ENCODE measurements at regions of chr11 and their contacts with region 1.

Region 1: DNA sequence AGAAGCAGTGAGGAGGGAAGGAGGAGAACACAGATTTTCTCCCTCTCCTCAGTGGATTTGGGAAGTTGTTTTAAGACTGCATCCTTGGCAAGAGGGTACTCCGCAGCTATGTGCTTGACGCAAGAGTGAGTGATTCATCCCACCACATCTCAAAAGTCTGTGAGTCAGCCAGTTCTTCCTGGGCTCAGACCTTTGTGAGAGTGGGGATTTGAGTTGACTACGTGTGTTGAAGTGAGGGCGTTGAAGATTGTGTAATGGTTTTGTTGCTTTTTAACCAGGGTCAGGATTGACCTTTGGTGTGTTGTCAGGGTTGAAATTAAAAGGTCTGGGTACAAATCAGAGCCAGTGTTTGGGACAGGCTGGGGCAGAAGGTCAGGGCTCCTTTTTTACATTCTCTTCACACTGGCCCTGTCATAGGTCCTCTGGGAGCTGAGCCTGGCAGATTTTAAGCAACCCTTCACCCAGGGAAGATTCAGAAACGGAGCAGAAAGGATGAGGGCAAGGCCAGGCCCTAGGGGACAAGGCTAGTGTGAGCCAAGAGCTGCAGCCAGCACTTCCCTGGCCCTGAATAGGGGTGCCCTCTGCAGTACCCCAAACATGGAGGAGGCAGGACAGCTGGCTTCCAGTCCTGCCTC is 4.2 kb upstream of the C11orf86 start:
- DNase-seq: peak; percentile 57
- ATAC-seq: peak; percentile 98
- H3K4me3 Mint-ChIP-seq: no peak overlapping the region
- H3K27ac Mint-ChIP-seq: peak overlapping the region; percentile 24
- H3K4me1 Mint-ChIP-seq: peaks cover 17% of the 10 kb centered on the region
- H3K27me3 Mint-ChIP-seq: peaks cover 13% of the 10 kb centered on the region

Region 2: DNA sequence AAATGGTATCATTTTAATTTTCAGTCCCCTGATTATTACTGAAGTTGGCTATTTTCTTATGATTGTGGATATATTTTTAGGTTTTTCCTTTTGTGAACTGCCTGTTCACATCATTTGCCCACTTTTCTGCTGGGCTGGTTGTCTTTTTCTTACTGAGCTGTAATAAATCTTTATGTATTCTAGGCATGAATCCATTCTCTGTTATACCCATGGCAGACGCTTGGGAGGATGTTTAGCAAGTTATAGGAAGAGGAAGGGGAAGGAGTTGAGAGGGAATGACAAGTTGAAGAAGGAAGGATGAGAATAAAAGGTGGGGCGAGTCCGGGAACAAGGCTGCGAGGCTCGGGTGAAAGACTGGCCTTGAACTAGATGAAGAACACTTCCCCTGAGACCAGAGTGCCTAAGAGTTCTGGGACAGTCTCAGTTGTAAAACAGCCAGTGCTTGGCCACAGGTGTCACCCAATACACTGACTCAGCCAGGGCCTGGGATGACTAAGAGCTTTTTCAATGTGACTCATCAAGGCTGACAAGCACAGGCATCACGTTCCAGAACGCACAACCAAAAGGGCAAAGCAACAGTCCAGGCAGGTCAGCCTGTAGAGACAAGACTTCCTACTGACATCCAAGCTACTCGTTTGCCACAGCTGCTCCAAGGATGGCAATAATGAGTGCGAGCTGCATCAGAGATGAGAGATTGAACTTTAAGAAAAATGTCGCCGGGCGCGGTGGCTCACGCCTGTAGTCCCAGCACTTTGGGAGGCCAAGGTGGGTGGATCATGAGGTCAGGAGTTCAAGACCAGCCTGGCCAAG is 78.9 kb before region 1 on chr11:
- CTCF ChIA-PET with region 1: interaction called, 5 read pairs
- POLR2A ChIA-PET with region 1: no interaction called
- intact Hi-C with region 1: loop called in 1 of 2 experiments (anchors 2 kb)
- DNase-seq: peak; percentile 85
- ATAC-seq: peak; percentile 100
- H3K4me3 Mint-ChIP-seq: no peak overlapping the region
- H3K27ac Mint-ChIP-seq: peak overlapping the region; percentile 8
- H3K4me1 Mint-ChIP-seq: peaks cover 8% of the 10 kb centered on the region
- H3K27me3 Mint-ChIP-seq: no peaks in the 10 kb centered on the region

Region 3: DNA sequence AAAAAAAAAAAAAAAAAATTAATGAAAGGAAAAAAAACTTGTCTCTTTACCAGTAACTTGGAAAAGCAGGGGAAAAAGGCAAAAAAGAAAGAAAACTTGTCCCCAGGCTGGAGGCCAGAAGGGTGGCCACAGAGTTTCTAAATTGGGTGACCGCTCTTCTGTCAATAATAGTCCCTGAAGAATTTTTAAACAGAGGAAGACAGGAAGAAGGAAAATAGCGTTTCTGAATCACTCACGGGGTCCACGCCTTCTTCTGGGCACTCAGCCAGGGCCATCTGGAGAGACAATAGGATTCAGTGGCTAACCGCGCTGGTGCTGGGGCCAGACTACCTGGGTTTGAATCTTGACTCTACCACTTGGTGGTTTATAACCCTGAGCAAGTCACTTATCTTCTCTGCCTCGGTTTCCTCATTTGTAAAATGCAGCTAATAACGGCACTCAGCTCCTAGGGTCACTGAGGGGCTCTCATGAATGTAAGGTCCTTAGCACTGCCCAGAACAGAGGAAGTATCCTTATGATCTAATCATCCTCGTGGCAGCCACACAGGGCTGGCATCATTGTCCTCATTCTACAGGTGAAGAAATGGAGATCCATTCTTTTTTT is 11.2 kb after region 1 on chr11:
- CTCF ChIA-PET with region 1: no interaction called
- POLR2A ChIA-PET with region 1: no interaction called
- intact Hi-C with region 1: no loop called
- DNase-seq: peak; percentile 56
- ATAC-seq: no peak
- H3K4me3 Mint-ChIP-seq: no peak overlapping the region
- H3K27ac Mint-ChIP-seq: no peak overlapping the region
- H3K4me1 Mint-ChIP-seq: peaks cover 5% of the 10 kb centered on the region
- H3K27me3 Mint-ChIP-seq: peaks cover 3% of the 10 kb centered on the region